ENCODE measurements at regions of chr1 and their contacts with region 1.

Region 1: DNA sequence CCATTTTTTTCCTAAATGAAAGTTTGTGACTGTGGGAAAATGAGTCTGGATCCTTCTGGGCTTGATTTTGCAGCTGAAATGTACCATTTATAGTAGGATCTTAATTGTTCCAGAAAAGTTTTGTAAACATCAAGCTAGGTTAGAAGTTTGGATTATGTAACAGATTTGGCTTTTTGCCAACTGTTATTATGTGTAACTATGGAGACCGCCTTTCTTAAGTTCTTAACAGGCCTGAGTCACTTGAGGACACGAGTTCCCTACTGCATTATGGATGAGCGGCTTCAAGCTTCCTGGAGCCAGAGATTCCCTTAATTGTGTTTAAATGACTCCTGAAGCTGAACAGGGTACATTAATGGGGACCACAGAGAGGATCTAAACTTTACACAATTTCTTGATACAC is 22.2 kb downstream of the SLC25A33 start:
- DNase-seq: no peak
- ATAC-seq: no peak
- H3K4me3 ChIP-seq: no peak overlapping the region
- H3K27ac ChIP-seq: no peak overlapping the region
- H3K4me1 ChIP-seq: no peaks in the 10 kb centered on the region
- H3K27me3 ChIP-seq: no peaks in the 10 kb centered on the region
- CTCF ChIP-seq: no peak
- EP300 ChIP-seq: no peak
- POLR2A ChIP-seq: no peak
- RAD21 ChIP-seq: no peak

Region 2: DNA sequence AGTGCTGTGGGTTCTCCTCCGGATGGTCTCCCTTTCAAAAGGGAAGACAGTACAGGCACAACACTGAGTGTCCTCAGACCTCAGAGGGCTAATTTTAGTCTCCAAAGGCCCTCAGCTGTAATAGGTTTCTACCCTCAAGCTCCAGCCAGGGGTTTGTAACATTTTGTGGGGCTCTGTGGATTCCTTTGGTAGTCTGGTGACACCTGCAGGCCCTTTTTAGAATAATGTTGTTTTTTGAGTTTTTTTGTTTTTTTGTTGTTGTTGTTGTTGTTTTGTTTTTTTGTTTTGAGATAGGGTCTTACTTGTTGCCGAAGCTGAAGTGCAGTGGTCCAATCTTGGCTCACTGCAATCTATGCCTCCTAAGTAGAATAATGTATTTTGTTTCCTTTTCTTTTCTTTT is 12.3 kb after region 1 on chr1:
- CTCF ChIA-PET with region 1: interaction called, 17 read pairs
- POLR2A ChIA-PET with region 1: no interaction called
- RAD21 ChIA-PET with region 1: no interaction called
- SMC1A ChIA-PET with region 1: interaction called, 3 read pairs
- in situ Hi-C with region 1: no loop called
- intact Hi-C with region 1: no loop called
- DNase-seq: no peak
- ATAC-seq: 0 out of 3 replicates have a peak, but pooled peaks have one; percentile 27
- H3K4me3 ChIP-seq: no peak overlapping the region
- H3K27ac ChIP-seq: no peak overlapping the region
- H3K4me1 ChIP-seq: no peaks in the 10 kb centered on the region
- H3K27me3 ChIP-seq: no peaks in the 10 kb centered on the region
- CTCF ChIP-seq: peak; percentile 21 to 39 (median 35); a peak in 4 of 6 replicates
- EP300 ChIP-seq: no peak
- POLR2A ChIP-seq: no peak
- RAD21 ChIP-seq: peak; percentile 60

Region 3: GRCh38 chr1:9593492-9594465 is 32.4 kb after region 1 on chr1:
- CTCF ChIA-PET with region 1: no interaction called
- POLR2A ChIA-PET with region 1: interaction called, 10 read pairs
- RAD21 ChIA-PET with region 1: no interaction called
- SMC1A ChIA-PET with region 1: interaction called, 3 read pairs
- in situ Hi-C with region 1: no loop called
- intact Hi-C with region 1: no loop called
- DNase-seq: peak; percentile 30
- ATAC-seq: peak; percentile 70
- H3K4me3 ChIP-seq: peak overlapping the region; percentile 34
- H3K27ac ChIP-seq: peak overlapping the region; percentile 58
- H3K4me1 ChIP-seq: peaks cover 28% of the 10 kb centered on the region
- H3K27me3 ChIP-seq: no peaks in the 10 kb centered on the region
- CTCF ChIP-seq: no peak
- EP300 ChIP-seq: no peak
- POLR2A ChIP-seq: no peak
- RAD21 ChIP-seq: no peak

Region 4: DNA sequence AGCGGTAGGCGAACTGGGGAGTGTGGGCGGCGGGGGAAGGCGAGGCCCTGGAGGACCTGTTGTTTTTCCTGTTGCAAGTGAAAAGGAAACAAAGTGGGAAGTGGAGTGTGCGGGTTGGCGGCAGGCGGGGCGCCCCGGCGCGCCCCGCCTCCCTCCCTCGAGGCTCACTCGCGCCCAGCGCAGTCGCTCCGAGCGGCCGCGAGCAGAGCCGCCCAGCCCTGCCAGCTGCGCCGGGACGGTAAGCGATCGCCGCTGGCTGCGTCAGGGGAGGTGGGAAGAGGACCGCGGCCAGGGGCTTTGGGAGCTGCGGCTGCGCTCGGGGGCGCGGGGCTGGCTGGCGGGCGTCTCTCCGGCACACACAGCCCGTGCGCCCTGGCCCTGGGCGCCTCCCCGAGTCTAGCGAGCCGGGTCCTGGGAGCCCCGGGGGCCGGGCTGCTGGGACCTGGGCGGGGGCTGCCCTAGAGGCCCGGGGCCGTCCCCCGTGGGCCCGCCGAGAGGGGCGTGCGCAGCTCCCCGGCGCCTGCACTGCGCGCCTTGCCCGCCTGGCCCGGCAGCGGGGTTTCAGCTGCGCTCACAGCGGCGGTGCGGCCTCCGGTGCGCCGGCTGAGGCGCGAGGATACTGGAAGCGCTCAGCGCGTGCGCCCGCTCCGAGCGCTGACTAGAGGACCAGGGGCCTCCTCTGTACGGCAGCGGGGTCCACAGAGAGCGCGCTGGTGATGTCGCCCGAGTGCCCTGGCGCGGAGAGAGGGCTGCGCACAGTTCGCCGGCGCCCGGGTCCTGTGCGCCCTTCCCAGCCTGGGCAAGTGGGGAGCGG is 90.3 kb after region 1 on chr1 and contains the start of gene PIK3CD:
- CTCF ChIA-PET with region 1: no interaction called
- POLR2A ChIA-PET with region 1: no interaction called
- RAD21 ChIA-PET with region 1: no interaction called
- SMC1A ChIA-PET with region 1: no interaction called
- in situ Hi-C with region 1: no loop called
- intact Hi-C with region 1: no loop called
- DNase-seq: no peak
- ATAC-seq: peak; percentile 47
- H3K4me3 ChIP-seq: peak within 1 kb of the TSS; percentile 86
- H3K27ac ChIP-seq: peak within 1 kb of the TSS; percentile 89
- H3K4me1 ChIP-seq: peaks cover 8% of the 10 kb centered on the region
- H3K27me3 ChIP-seq: no peaks in the 10 kb centered on the region
- CTCF ChIP-seq: no peak
- EP300 ChIP-seq: no peak
- POLR2A ChIP-seq: peak; percentile 79
- RAD21 ChIP-seq: no peak
- polyA plus RNA-seq, gene PIK3CD: 7.0 to 12.7 TPM

Measured in GM12878 (cell line).